ENCODE measurements at regions of chr1 and their contacts with region 1.

Region 1: DNA sequence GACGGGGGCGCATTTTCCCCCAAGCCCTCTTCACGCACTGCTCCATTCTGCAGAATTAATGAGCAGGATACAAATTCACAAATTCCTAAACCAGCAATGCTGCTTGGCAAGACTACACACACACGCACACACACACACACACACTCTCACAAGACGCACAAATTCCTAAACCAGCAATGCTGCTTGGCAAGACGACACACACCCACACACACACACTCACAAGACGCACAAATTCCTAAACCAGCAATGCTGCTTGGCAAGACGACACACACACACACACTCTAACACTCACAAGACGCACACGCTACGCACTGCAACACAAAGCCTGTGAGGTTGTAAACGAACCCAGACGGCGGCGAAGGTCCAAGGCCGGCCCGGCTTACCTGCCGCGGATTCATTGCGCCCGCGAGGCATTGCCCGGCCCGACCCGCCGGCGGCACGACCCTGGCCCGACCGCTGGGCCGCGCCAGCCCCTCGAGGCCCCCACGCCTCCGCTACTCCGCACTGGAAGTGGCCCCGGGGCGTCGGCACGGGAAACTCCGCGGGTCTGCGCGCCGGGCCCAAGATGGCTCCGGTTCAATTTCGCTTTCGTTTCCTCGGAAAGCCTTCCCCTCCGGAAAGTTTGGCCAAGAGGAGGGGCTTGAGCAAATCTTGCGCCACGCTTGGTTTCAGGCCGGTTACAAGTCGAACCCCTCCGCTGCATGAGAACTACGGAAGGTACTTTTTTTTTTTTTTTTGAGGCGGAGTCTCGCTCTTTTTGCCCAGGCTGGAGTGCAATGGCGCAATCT is at the start of gene ADAR:
- DNase-seq: peak; percentile 99
- H3K4me3 Mint-ChIP-seq: peak within 1 kb of the TSS; percentile 96
- H3K27ac Mint-ChIP-seq: peak within 1 kb of the TSS; percentile 92
- H3K4me1 Mint-ChIP-seq: peaks cover 42% of the 10 kb centered on the region
- H3K27me3 Mint-ChIP-seq: no peaks in the 10 kb centered on the region
- CTCF ChIP-seq: no peak
- total RNA-seq, gene ADAR: 168 and 196 TPM in 2 replicates

Region 2: GRCh38 chr1:154263465-154264332 is 344.1 kb before region 1 on chr1:
- CTCF ChIA-PET with region 1: no interaction called
- POLR2A ChIA-PET with region 1: no interaction called
- intact Hi-C with region 1: no loop called
- DNase-seq: no peak
- H3K4me3 Mint-ChIP-seq: no peak overlapping the region
- H3K27ac Mint-ChIP-seq: peak overlapping the region; percentile 63
- H3K4me1 Mint-ChIP-seq: no peaks in the 10 kb centered on the region
- H3K27me3 Mint-ChIP-seq: no peaks in the 10 kb centered on the region
- CTCF ChIP-seq: no peak

Region 3: DNA sequence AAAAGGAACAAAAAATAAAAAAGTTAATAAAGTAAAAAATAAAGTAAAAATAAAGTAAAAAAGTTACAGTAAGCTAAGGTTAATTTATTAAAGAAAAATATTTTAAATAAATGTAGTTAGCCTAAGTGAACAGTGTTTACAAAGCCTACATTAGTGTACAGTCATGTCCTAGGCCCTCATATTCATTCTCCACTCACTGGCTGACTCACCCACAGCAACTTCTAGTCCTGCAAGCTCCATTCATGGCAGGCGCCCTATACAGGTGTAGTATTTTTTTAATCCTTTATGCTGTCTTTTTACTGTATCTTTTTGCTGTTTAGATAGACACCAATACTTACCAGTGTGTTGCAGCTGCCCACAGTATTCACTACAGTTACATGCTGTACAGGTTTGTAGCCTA is 12.2 kb before region 1 on chr1:
- CTCF ChIA-PET with region 1: interaction called, 6 read pairs
- POLR2A ChIA-PET with region 1: interaction called, 17 read pairs
- intact Hi-C with region 1: no loop called
- DNase-seq: no peak
- H3K4me3 Mint-ChIP-seq: no peak overlapping the region
- H3K27ac Mint-ChIP-seq: no peak overlapping the region
- H3K4me1 Mint-ChIP-seq: no peaks in the 10 kb centered on the region
- H3K27me3 Mint-ChIP-seq: no peaks in the 10 kb centered on the region
- CTCF ChIP-seq: no peak

Region 4: GRCh38 chr1:154621875-154622274 is 14.1 kb after region 1 on chr1:
- CTCF ChIA-PET with region 1: interaction called, 11 read pairs
- POLR2A ChIA-PET with region 1: interaction called, 161 read pairs
- intact Hi-C with region 1: loop called (anchors 2 kb)
- DNase-seq: no peak
- H3K4me3 Mint-ChIP-seq: no peak overlapping the region
- H3K27ac Mint-ChIP-seq: peak overlapping the region; percentile 8
- H3K4me1 Mint-ChIP-seq: peaks cover 21% of the 10 kb centered on the region
- H3K27me3 Mint-ChIP-seq: no peaks in the 10 kb centered on the region
- CTCF ChIP-seq: no peak

Region 5: GRCh38 chr1:154627257-154628120 is 19.7 kb after region 1 on chr1:
- CTCF ChIA-PET with region 1: interaction called, 11 read pairs
- POLR2A ChIA-PET with region 1: interaction called, 161 read pairs
- intact Hi-C with region 1: loop called (anchors 2 kb)
- DNase-seq: peak; percentile 93
- H3K4me3 Mint-ChIP-seq: peak overlapping the region; percentile 84
- H3K27ac Mint-ChIP-seq: peak overlapping the region; percentile 99
- H3K4me1 Mint-ChIP-seq: peaks cover 29% of the 10 kb centered on the region
- H3K27me3 Mint-ChIP-seq: peaks cover 26% of the 10 kb centered on the region
- CTCF ChIP-seq: no peak

Region 6: GRCh38 chr1:154657556-154657955 is 49.8 kb after region 1 on chr1:
- CTCF ChIA-PET with region 1: no interaction called
- POLR2A ChIA-PET with region 1: no interaction called
- intact Hi-C with region 1: no loop called
- DNase-seq: no peak
- H3K4me3 Mint-ChIP-seq: no peak overlapping the region
- H3K27ac Mint-ChIP-seq: no peak overlapping the region
- H3K4me1 Mint-ChIP-seq: no peaks in the 10 kb centered on the region
- H3K27me3 Mint-ChIP-seq: peaks cover 94% of the 10 kb centered on the region
- CTCF ChIP-seq: no peak

Measured in MCF 10A (cell line).